Activated CD8-positive, alpha-beta T cell treated with anti-CD3 and anti-CD28 coated beads for 36 hours (primary cell): ENCODE measurements at regions of chr14 and their contacts with region 1.

Region 1: DNA sequence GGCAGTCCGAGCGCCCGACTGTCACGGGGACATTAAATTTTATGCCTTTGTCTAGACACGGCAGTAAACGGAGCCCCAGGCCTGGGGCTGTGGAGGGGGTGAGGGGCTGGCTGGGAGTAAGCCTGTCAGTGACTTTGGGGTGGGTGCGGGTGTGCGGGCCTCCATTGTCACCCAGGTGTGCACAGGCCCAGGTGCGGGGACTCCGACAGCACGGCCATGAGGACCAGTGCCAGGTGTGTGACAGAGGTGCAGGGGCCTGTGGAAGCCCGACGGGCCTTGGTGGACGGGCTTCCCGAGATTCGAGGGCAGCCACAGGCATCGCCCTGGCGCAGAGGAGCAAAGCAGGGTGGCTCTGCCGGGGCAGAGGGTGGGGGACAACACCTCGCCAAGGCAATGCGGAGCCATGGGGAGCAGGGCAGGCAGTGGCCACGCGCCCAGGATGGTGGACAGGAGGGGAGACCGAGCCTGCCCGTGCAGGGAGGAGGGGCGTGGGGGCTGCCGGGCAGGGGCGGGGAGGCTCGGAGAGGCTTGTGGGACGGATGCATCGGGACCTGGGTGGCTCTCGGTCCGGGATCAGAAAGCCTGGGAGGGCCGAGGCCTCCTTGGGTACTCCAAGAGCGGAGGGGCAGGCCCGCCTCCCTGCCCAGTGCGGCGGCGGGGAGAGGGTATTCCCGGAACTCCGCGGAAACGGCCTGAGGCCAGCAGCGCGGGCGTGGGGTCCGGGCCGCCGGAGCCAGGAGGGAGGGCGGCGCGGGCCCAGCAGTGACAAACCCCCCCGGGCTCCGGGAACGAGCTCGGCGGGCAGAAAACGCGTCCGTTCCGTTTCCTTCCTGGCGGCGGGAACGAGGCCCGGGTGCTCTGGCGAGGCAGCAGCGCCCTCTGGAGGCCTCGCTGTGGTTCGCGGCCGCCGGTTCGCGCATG is 1.5 kb downstream of the TMEM121 start:
- DNase-seq: peak; percentile 86
- ATAC-seq: peak; percentile 60
- H3K4me3 Mint-ChIP-seq: peak overlapping the region; percentile 81
- H3K27ac Mint-ChIP-seq: peak overlapping the region; percentile 69
- H3K4me1 Mint-ChIP-seq: peaks cover 17% of the 10 kb centered on the region
- H3K27me3 Mint-ChIP-seq: peaks cover 3% of the 10 kb centered on the region
- CTCF ChIP-seq: peak; percentile 81

Region 2: DNA sequence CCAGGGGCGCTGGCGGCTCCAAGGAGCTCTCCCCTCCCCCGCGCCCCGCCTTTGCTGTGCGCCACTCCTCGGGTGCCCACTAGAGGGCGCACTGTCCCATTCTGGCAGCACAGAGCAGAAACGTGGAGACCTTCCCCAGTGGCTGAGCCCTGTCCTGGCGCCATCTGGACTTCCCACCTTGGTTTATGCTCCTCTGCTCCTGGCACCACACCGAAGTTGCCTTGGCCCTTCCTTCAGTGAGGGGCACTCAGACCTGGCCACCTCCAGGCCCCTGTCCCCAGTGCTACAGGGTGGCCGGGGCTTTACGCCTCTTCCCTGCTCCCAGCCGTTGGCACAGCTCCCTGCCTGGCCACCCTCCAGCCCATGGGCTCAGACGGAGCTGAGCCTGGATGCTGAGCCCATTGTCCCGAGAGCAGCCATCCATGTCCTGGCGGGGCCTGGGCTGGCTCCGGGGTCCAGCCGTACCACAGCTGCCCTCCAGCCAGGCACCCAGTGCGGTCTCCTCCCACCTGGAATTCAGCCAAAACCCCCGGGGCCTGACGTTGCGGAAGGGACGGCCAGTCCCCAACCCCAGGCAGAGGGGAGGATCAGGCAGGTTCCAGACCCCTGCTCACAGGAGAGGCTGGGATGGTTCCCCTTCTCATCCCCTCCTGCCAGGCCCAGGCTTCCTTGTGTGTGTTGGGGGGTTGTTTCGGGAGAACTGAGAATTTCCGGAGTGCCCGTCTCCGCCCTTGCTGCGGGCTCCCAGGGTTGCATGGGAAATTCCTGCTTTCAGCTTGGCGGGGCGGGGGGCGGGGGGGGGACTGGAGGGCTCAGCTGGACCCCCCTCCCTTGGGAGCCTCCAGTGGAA is 46.7 kb before region 1 on chr14:
- CTCF ChIA-PET with region 1: interaction called, 8 read pairs
- POLR2A ChIA-PET with region 1: interaction called, 13 read pairs
- intact Hi-C with region 1: no loop called
- DNase-seq: peak; percentile 92
- ATAC-seq: peak; percentile 68
- H3K4me3 Mint-ChIP-seq: peak overlapping the region; percentile 65
- H3K27ac Mint-ChIP-seq: peak overlapping the region; percentile 96
- H3K4me1 Mint-ChIP-seq: peaks cover 52% of the 10 kb centered on the region
- H3K27me3 Mint-ChIP-seq: peaks cover 21% of the 10 kb centered on the region
- CTCF ChIP-seq: peak; percentile 93

Region 3: DNA sequence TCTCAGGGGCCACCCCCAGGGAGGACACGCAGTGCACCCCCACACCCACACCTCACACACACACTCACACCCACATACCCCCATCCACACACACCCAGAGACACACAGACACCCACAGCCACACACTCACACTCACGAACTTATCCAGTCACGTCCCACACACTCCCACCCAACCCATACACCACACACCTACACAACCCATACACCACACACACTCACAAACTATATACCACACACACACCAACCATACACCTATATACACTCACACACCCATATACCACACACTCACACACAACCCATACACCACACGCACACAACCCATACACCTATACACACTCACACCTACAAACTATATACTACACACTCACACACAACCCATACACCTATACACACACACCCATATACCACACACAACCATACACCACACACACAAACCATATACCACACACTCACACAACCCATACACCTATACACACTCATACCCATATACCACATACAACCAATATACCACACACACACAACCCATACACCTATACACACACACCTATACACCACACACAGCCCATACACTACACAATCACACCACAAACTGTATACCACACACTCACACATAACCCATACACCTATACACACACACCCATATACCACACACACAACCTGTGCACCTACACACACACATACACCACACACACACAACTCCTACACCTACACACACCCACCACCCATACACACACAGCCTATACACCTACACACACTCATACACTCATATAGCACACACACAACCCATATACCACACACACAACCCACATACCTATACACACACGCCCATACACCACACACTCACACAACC is 41.2 kb after region 1 on chr14:
- CTCF ChIA-PET with region 1: no interaction called
- POLR2A ChIA-PET with region 1: no interaction called
- intact Hi-C with region 1: no loop called
- DNase-seq: no peak
- ATAC-seq: no peak
- H3K4me3 Mint-ChIP-seq: no peak overlapping the region
- H3K27ac Mint-ChIP-seq: no peak overlapping the region
- H3K4me1 Mint-ChIP-seq: no peaks in the 10 kb centered on the region
- H3K27me3 Mint-ChIP-seq: no peaks in the 10 kb centered on the region
- CTCF ChIP-seq: no peak

Region 4: GRCh38 chr14:105640936-105641843 is 113.3 kb after region 1 on chr14:
- CTCF ChIA-PET with region 1: no interaction called
- POLR2A ChIA-PET with region 1: no interaction called
- intact Hi-C with region 1: no loop called
- DNase-seq: no peak
- ATAC-seq: no peak
- H3K4me3 Mint-ChIP-seq: no peak overlapping the region
- H3K27ac Mint-ChIP-seq: no peak overlapping the region
- H3K4me1 Mint-ChIP-seq: no peaks in the 10 kb centered on the region
- H3K27me3 Mint-ChIP-seq: no peaks in the 10 kb centered on the region
- CTCF ChIP-seq: no peak